Common myeloid progenitor, CD34-positive (primary cell): ENCODE measurements at regions of chr3 and their contacts with region 1.

Region 1: GRCh38 chr3:39141171-39141995 is 12.0 kb downstream of the CSRNP1 start:
- DNase-seq: peak in 2 of 3 donors; percentile 34 to 42
- H3K4me3 ChIP-seq: peak overlapping the region in 2 of 7 experiments; percentile 6 to 16
- H3K27ac ChIP-seq: peak overlapping the region in 1 of 2 experiments; percentile 34
- H3K4me1 ChIP-seq: peaks cover 1 to 41% (median 34%) of the 10 kb centered on the region in 4 experiments
- H3K27me3 ChIP-seq: no peaks in the 10 kb centered on the region

Region 2: GRCh38 chr3:38507120-38507519 is 634.3 kb before region 1 on chr3:
- CTCF ChIA-PET with region 1: no interaction called
- POLR2A ChIA-PET with region 1: no interaction called
- DNase-seq: no peak
- H3K4me3 ChIP-seq: no peak overlapping the region
- H3K27ac ChIP-seq: no peak overlapping the region
- H3K4me1 ChIP-seq: no peaks in the 10 kb centered on the region
- H3K27me3 ChIP-seq: no peaks in the 10 kb centered on the region

Region 3: GRCh38 chr3:39107388-39108199 is 33.8 kb before region 1 on chr3 and contains the starts of genes GORASP1 and TTC21A:
- CTCF ChIA-PET with region 1: interaction called, 11 read pairs
- POLR2A ChIA-PET with region 1: interaction called, 6 read pairs
- DNase-seq: peak; percentile 80 to 89 (median 85)
- H3K4me3 ChIP-seq: peak within 1 kb of the TSS; percentile 73 to 94 (median 85)
- H3K27ac ChIP-seq: peak within 1 kb of the TSS; percentile 37 to 71
- H3K4me1 ChIP-seq: peaks cover 2 to 35% (median 25%) of the 10 kb centered on the region in 4 experiments
- H3K27me3 ChIP-seq: no peaks in the 10 kb centered on the region

Region 4: GRCh38 chr3:39419730-39420315 is 278.4 kb after region 1 on chr3:
- CTCF ChIA-PET with region 1: no interaction called
- POLR2A ChIA-PET with region 1: no interaction called
- DNase-seq: peak in 1 of 3 donors; percentile 52
- H3K4me3 ChIP-seq: no peak overlapping the region
- H3K27ac ChIP-seq: no peak overlapping the region
- H3K4me1 ChIP-seq: peaks cover 0 to 7% (median 6%) of the 10 kb centered on the region in 4 experiments
- H3K27me3 ChIP-seq: no peaks in the 10 kb centered on the region